CD4-positive, alpha-beta T cell (primary cell): ENCODE measurements at regions of chr12 and their contacts with region 1.

Region 1: DNA sequence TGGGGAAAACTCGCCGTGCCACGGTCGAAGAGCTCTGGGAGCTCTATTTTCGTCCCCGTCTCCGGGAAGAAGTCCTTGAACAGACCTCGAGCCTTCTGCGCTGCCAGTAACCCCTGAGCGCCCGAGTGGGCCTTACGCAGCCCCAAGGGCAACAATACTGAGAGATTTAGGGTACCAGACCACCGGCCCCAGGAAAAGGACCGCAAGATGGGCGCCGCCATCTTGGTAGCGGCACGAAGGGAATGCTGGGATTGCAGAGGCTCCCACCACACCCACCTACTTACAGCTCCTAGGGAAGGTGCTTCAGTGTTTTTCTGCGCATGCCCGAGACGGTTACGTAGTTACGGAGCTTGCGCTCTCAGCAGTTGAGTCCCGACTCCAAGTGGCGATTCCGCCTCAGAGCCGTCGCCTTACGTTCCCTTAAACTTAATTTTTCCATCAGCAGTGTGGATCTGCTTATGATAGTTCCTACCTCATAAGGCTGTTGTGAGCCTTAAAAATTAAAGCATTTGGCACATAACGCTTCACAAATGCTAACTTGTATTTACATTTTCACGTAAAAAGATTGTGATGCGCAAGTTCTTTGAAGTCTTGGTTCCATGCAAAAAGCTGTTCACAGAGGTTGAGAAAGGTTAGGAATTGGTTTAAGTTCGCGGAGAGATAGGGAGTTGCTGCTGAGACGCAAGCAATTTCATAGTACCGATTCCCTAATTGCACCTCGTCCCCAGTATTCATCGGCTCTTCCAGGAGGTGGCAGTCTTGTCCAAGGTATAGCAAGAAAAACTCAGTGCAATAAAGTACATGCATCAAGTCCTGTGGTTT is at the start of gene YARS2:
- DNase-seq: peak; percentile 75 to 97 (median 84)
- ATAC-seq: peak; percentile 81
- H3K4me3 ChIP-seq: peak within 1 kb of the TSS; percentile 90
- H3K4me3 Mint-ChIP-seq: peak within 1 kb of the TSS; percentile 91
- H3K27ac ChIP-seq: peak within 1 kb of the TSS; percentile 69 to 88
- H3K27ac Mint-ChIP-seq: peak within 1 kb of the TSS; percentile 89
- H3K4me1 ChIP-seq: peaks cover 20% of the 10 kb centered on the region
- H3K4me1 Mint-ChIP-seq: peaks cover 22% of the 10 kb centered on the region
- H3K27me3 ChIP-seq: no peaks in the 10 kb centered on the region
- H3K27me3 Mint-ChIP-seq: no peaks in the 10 kb centered on the region
- CTCF ChIP-seq: peak; percentile 92
- total RNA-seq, gene YARS2: 12.0 to 13.0 TPM

Region 2: DNA sequence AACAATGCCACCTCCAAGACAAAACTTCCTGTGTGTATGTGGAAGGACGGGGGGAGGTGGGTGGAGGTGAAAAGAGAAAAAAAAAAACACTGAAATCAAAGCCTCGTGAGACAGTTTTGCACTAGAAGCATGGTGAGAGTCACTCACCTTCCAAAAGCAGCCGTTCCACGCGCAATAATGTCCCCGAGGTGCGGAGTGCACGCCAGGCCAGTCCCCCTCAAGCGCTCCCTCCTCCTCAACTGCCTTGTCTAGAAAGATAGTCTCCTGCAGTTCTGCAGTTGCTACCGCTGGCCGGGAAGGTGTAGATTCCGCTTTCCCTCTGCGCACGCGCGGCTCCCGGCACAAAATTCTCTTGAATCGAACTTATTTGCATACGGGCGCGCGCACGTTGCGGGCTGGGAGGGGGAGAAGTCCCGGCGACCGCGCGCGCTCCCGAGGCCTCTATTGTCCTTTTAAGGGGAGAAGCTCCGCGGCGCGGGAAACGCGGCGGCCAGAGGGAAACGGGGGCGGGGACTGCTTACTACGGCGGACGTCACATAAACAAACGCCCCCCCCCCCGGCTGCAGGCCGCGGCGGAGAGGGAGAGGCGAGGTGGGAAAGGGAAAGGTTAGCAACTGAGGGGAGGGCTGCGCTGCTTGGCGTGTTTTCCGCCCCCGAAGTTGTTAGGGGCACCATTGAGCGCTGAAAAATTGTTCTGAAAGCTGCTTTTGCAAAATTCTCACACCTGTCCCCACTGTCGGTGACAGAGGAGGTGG is 1429.8 kb before region 1 on chr12 and contains the start of gene SINHCAF:
- CTCF ChIA-PET with region 1: no interaction called
- POLR2A ChIA-PET with region 1: interaction called, 4 read pairs
- intact Hi-C with region 1: loop called in 1 of 2 experiments (anchors 10 kb)
- DNase-seq: peak; percentile 96 to 100 (median 99)
- ATAC-seq: peak; percentile 52
- H3K4me3 ChIP-seq: peak within 1 kb of the TSS; percentile 99
- H3K4me3 Mint-ChIP-seq: peak within 1 kb of the TSS; percentile 92
- H3K27ac ChIP-seq: peak within 1 kb of the TSS; percentile 77 to 95
- H3K27ac Mint-ChIP-seq: peak within 1 kb of the TSS; percentile 85
- H3K4me1 ChIP-seq: peaks cover 27% of the 10 kb centered on the region
- H3K4me1 Mint-ChIP-seq: peaks cover 32% of the 10 kb centered on the region
- H3K27me3 ChIP-seq: no peaks in the 10 kb centered on the region
- H3K27me3 Mint-ChIP-seq: no peaks in the 10 kb centered on the region
- CTCF ChIP-seq: no peak
- total RNA-seq, gene SINHCAF: 103 to 119 TPM

Region 3: DNA sequence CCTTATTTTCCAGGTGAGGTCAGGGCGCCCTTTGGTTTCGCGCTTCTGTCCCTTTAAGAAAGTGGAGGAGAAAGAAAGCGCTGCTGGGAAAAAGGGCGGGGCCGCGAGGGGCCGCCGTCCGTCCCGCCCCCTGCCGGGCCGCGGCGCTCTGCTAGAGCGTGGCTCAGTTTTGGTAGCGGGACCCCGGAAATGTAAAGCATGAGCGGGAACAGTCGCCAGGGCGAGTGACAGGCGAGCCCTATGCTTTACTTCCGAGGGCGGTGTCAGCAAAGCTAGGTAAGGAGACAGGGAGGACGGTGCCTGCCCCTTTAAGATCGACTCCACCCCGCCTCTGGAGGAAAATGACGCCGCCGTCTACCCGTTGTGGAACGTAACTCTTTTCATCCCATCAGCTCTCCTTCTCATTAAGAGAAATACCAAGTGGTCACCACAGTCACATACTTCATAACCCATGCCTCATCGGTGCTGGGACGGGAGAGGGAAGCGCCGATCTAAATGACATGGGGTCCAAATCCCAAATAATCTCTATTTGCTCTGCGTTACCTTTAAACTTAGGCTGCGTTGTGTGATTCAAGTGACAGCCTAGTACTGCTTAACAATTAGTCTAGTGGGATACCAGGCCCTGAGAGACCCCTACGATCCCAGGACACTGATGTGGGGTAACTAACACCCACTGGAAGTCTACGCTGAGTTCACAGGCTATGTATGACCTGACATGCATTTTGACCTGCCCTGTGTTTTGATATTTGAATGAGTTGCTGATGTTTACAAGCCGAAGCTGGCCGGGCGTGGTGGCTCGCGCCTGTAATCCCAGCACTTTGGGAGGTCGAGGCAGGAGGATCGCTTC is 1096.6 kb before region 1 on chr12 and contains the start of gene ETFBKMT:
- CTCF ChIA-PET with region 1: interaction called, 11 read pairs
- POLR2A ChIA-PET with region 1: interaction called, 6 read pairs
- intact Hi-C with region 1: loop called (anchors 5 to 10 kb)
- DNase-seq: peak; percentile 83 to 97 (median 90)
- ATAC-seq: peak; percentile 97
- H3K4me3 ChIP-seq: peak within 1 kb of the TSS; percentile 68
- H3K4me3 Mint-ChIP-seq: peak within 1 kb of the TSS; percentile 99
- H3K27ac ChIP-seq: peak within 1 kb of the TSS; percentile 68 to 91
- H3K27ac Mint-ChIP-seq: peak within 1 kb of the TSS; percentile 97
- H3K4me1 ChIP-seq: peaks cover 12% of the 10 kb centered on the region
- H3K4me1 Mint-ChIP-seq: peaks cover 19% of the 10 kb centered on the region
- H3K27me3 ChIP-seq: no peaks in the 10 kb centered on the region
- H3K27me3 Mint-ChIP-seq: no peaks in the 10 kb centered on the region
- CTCF ChIP-seq: no peak
- total RNA-seq, gene ETFBKMT: 0.38 to 0.92 TPM

Region 4: GRCh38 chr12:32679091-32679919 is 76.6 kb before region 1 on chr12 and contains the start of gene DNM1L:
- CTCF ChIA-PET with region 1: interaction called, 3 read pairs
- POLR2A ChIA-PET with region 1: interaction called, 17 read pairs
- intact Hi-C with region 1: loop called in 1 of 2 experiments (anchors 2 kb)
- DNase-seq: peak; percentile 84 to 96 (median 90)
- ATAC-seq: peak; percentile 98
- H3K4me3 ChIP-seq: peak within 1 kb of the TSS; percentile 79
- H3K4me3 Mint-ChIP-seq: peak within 1 kb of the TSS; percentile 94
- H3K27ac ChIP-seq: peak within 1 kb of the TSS; percentile 67 to 73
- H3K27ac Mint-ChIP-seq: peak within 1 kb of the TSS; percentile 84
- H3K4me1 ChIP-seq: peaks cover 11% of the 10 kb centered on the region
- H3K4me1 Mint-ChIP-seq: peaks cover 36% of the 10 kb centered on the region
- H3K27me3 ChIP-seq: no peaks in the 10 kb centered on the region
- H3K27me3 Mint-ChIP-seq: no peaks in the 10 kb centered on the region
- CTCF ChIP-seq: no peak
- total RNA-seq, gene DNM1L: 70.9 to 74.6 TPM

Region 5: GRCh38 chr12:32718926-32719325 is 36.9 kb before region 1 on chr12:
- CTCF ChIA-PET with region 1: no interaction called
- POLR2A ChIA-PET with region 1: no interaction called
- intact Hi-C with region 1: no loop called
- DNase-seq: no peak
- ATAC-seq: no peak
- H3K4me3 ChIP-seq: no peak overlapping the region
- H3K4me3 Mint-ChIP-seq: no peak overlapping the region
- H3K27ac ChIP-seq: no peak overlapping the region
- H3K27ac Mint-ChIP-seq: no peak overlapping the region
- H3K4me1 ChIP-seq: no peaks in the 10 kb centered on the region
- H3K4me1 Mint-ChIP-seq: no peaks in the 10 kb centered on the region
- H3K27me3 ChIP-seq: no peaks in the 10 kb centered on the region
- H3K27me3 Mint-ChIP-seq: no peaks in the 10 kb centered on the region
- CTCF ChIP-seq: no peak

Region 6: GRCh38 chr12:33605751-33606150 is 849.9 kb after region 1 on chr12:
- CTCF ChIA-PET with region 1: no interaction called
- POLR2A ChIA-PET with region 1: no interaction called
- intact Hi-C with region 1: loop called in 1 of 2 experiments (anchors 10 kb)
- DNase-seq: peak in 2 of 14 experiments; percentile 8 to 9
- ATAC-seq: no peak
- H3K4me3 ChIP-seq: no peak overlapping the region
- H3K4me3 Mint-ChIP-seq: no peak overlapping the region
- H3K27ac ChIP-seq: no peak overlapping the region
- H3K27ac Mint-ChIP-seq: no peak overlapping the region
- H3K4me1 ChIP-seq: no peaks in the 10 kb centered on the region
- H3K4me1 Mint-ChIP-seq: no peaks in the 10 kb centered on the region
- H3K27me3 ChIP-seq: no peaks in the 10 kb centered on the region
- H3K27me3 Mint-ChIP-seq: no peaks in the 10 kb centered on the region
- CTCF ChIP-seq: no peak